ENCODE measurements at regions of chr1 and their contacts with region 1.

Region 1: GRCh38 chr1:55021965-55022546 is 17.3 kb upstream of the PCSK9 start:
- DNase-seq: peak; percentile 93
- H3K4me3 ChIP-seq: no peak overlapping the region; a peak in 1 of 4 replicates
- H3K27ac ChIP-seq: no peak overlapping the region
- H3K4me1 ChIP-seq: no peaks in the 10 kb centered on the region; a peak in 1 of 4 replicates
- H3K27me3 ChIP-seq: no peaks in the 10 kb centered on the region
- CTCF ChIP-seq: peak; percentile 92
- EP300 ChIP-seq: no peak
- RAD21 ChIP-seq: peak; percentile 91

Region 2: DNA sequence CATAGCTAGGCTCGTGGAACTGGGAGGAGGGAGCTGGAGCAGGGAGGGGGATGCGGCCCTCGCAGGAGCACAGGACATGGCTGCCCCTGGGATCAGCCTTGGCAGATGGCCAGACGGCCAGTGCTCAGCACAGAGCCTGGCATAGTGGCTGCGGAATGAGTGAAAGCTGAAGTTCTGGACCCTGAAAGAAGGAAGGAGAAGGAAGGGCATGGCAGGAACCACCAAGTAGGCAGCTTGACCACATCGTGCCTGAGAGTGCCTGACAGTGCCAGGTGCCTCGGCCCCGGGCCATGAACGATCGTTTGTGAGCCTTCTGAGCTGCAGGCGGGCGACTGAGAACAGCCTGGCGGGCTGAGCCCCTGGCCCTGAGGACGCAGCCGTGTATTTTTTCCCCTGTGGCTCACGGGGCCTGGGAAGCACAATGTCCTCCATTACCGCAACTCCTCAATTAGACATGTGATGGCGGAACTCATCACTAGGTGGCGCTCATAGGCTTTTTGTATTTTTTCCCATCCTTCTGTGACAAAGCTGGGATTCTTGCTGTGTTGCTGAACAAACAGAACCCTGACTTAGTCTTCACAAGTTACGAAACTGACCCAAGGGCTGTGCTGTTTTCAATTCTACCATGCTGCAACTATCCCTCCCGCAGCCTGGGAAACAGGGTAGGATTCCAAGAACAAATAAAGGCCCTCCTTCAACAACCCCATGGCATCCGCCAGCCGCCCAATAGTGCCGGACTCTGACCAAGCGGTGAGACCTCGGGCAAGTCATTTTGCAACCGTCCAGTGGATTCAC is 71.5 kb before region 1 on chr1:
- CTCF ChIA-PET with region 1: interaction called, 390 read pairs
- POLR2A ChIA-PET with region 1: interaction called, 10 read pairs
- DNase-seq: peak; percentile 76
- H3K4me3 ChIP-seq: no peak overlapping the region; a peak in 2 of 4 replicates
- H3K27ac ChIP-seq: peak overlapping the region in 1 of 2 experiments; percentile 54; a peak in 2 of 4 replicates
- H3K4me1 ChIP-seq: peaks cover 7 to 9% of the 10 kb centered on the region in 2 experiments; a peak in 2 of 4 replicates
- H3K27me3 ChIP-seq: no peaks in the 10 kb centered on the region
- CTCF ChIP-seq: peak; percentile 81
- EP300 ChIP-seq: no peak
- RAD21 ChIP-seq: peak; percentile 85

Region 3: DNA sequence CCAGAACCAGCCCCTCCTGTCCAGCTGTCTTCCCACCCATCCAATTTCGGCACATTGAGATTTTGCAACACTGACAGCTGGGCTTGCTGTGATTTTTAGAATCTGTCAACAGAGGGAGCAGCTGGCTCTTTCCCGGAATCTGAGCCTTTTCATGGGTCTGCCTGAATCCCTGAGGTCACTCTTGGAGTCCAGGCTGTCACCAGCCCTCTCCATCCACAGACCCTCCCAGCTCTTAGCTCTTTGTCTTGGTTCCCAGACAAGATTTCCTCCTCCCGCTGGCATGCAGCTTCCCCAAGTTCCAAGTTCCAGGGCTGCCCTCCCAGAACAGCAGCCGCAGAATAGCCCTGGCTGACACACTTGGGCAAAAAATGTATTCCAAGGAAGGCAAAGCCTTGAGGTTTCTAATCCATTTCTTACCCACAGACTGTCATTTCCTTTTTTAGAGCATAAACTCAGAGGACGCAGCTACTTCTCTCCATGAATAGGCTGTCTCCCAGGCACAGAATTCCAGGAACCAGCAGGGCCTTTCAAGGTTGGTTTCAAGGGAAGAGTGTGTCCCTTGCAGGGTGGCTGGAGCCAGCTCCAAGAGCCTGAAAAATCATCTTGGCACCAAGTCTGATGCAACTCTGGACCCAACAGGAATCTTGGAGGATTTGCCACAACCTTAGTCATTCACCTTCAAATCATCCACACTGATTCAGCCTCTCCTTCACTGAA is 48.7 kb before region 1 on chr1:
- CTCF ChIA-PET with region 1: interaction called, 15 read pairs
- POLR2A ChIA-PET with region 1: no interaction called
- DNase-seq: peak; percentile 65
- H3K4me3 ChIP-seq: no peak overlapping the region
- H3K27ac ChIP-seq: no peak overlapping the region
- H3K4me1 ChIP-seq: no peaks in the 10 kb centered on the region; a peak in 1 of 4 replicates
- H3K27me3 ChIP-seq: no peaks in the 10 kb centered on the region
- CTCF ChIP-seq: peak; percentile 43
- EP300 ChIP-seq: no peak
- RAD21 ChIP-seq: peak; percentile 61

Region 4: GRCh38 chr1:54987919-54988705 is 33.9 kb before region 1 on chr1:
- CTCF ChIA-PET with region 1: interaction called, 13 read pairs
- POLR2A ChIA-PET with region 1: no interaction called
- DNase-seq: peak; percentile 84
- H3K4me3 ChIP-seq: no peak overlapping the region
- H3K27ac ChIP-seq: no peak overlapping the region; a peak in 1 of 4 replicates
- H3K4me1 ChIP-seq: peaks cover 0 to 11% of the 10 kb centered on the region in 2 experiments; a peak in 1 of 4 replicates
- H3K27me3 ChIP-seq: no peaks in the 10 kb centered on the region; the same call in 1 of the 2 replicates
- CTCF ChIP-seq: no peak
- EP300 ChIP-seq: no peak
- RAD21 ChIP-seq: no peak

Region 5: DNA sequence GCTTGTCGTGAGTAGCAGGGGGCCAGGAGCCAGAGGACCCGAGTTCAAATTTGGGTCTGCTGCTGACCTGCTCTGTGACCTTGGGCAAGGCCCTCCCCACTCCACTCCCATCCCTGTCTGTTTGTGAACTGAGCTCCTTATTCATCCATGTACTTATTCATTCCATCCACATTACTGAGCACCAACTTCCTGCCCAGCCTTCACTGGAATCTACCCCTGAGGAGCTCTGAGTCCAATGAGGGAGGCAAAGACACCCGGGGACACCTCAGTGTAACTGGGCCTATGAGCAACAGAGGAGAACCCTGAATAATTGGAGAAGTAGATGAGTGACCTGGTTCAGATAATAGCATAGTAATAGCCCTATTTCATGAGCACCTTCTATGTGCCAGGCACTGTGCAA is 14.4 kb before region 1 on chr1:
- CTCF ChIA-PET with region 1: interaction called, 159 read pairs
- POLR2A ChIA-PET with region 1: no interaction called
- DNase-seq: no peak
- H3K4me3 ChIP-seq: no peak overlapping the region
- H3K27ac ChIP-seq: 0 out of 4 replicates have a peak overlapping the region, but pooled peaks of 1 of the 2 experiments have one; percentile 3
- H3K4me1 ChIP-seq: peaks cover 0 to 4% of the 10 kb centered on the region in 2 experiments; a peak in 1 of 4 replicates
- H3K27me3 ChIP-seq: no peaks in the 10 kb centered on the region
- CTCF ChIP-seq: no peak
- EP300 ChIP-seq: no peak
- RAD21 ChIP-seq: no peak

Region 6: DNA sequence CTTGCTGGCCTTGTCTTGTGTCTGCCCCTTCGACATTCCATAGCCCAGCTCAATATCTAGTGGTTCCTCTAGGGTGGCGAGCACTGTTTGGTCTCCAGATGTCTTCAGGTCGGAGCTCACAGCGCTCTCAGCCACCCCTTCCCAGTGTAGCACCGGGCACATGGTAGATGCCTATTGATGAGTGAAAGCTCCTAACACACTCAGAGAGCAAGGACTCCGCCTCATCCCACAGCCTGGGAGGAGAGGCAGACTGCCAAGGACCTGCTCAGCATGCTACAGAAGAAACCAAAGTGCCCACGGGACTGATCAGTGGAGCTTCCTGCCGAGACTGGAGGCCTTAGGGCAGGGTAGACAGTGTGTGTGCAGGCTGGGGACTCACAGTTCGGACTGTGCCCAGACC is 28.2 kb after region 1 on chr1:
- CTCF ChIA-PET with region 1: interaction called, 15 read pairs
- POLR2A ChIA-PET with region 1: no interaction called
- DNase-seq: no peak
- H3K4me3 ChIP-seq: no peak overlapping the region
- H3K27ac ChIP-seq: peak overlapping the region in 1 of 2 experiments; percentile 62; a peak in 1 of 4 replicates
- H3K4me1 ChIP-seq: peaks cover 0 to 28% of the 10 kb centered on the region in 2 experiments; a peak in 1 of 4 replicates
- H3K27me3 ChIP-seq: no peaks in the 10 kb centered on the region
- CTCF ChIP-seq: no peak
- EP300 ChIP-seq: no peak
- RAD21 ChIP-seq: no peak

Region 7: DNA sequence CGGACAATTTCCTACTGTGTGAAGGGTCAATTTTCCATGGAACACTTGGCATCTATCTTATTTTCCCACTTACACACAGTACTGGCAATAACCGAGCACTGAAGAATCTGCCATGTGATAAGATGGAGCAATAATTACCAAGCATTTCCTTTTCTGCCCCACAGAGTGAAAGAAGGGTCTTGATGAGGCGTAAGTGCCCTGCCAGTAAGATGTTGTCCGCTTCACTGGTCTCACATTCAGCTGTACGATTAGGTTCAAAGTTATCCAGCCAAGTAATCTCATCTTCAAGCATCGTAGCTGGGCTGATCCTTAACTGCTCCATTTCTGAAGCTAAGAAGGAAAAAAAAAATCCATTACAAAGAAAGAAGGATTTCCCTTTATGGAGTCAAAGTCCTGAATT is 85.0 kb after region 1 on chr1:
- CTCF ChIA-PET with region 1: no interaction called
- POLR2A ChIA-PET with region 1: no interaction called
- DNase-seq: no peak
- H3K4me3 ChIP-seq: no peak overlapping the region
- H3K27ac ChIP-seq: no peak overlapping the region
- H3K4me1 ChIP-seq: no peaks in the 10 kb centered on the region
- H3K27me3 ChIP-seq: no peaks in the 10 kb centered on the region
- CTCF ChIP-seq: no peak
- EP300 ChIP-seq: no peak
- RAD21 ChIP-seq: no peak

Measured in SK-N-SH (cell line).